ENCODE measurements at regions of chr10 and their contacts with region 1.

Region 1: GRCh38 chr10:45580371-45581215 is 92.0 kb downstream of the ZFAND4 start:
- DNase-seq: peak in 8 of 35 experiments; percentile 10 to 59 (median 15)
- ATAC-seq: peak; percentile 63 to 77 (median 68)
- H3K4me3 ChIP-seq: peak overlapping the region; percentile 53 to 61
- H3K4me3 Mint-ChIP-seq: peak overlapping the region; percentile 87 to 94 (median 93)
- H3K27ac ChIP-seq: peak overlapping the region; percentile 82
- H3K27ac Mint-ChIP-seq: peak overlapping the region; percentile 97 to 99
- H3K4me1 ChIP-seq: peaks cover 9 to 11% of the 10 kb centered on the region in 2 experiments
- H3K4me1 Mint-ChIP-seq: peaks cover 42 to 52% (median 50%) of the 10 kb centered on the region in 3 donors
- H3K27me3 ChIP-seq: no peaks in the 10 kb centered on the region
- H3K27me3 Mint-ChIP-seq: no peaks in the 10 kb centered on the region

Region 2: DNA sequence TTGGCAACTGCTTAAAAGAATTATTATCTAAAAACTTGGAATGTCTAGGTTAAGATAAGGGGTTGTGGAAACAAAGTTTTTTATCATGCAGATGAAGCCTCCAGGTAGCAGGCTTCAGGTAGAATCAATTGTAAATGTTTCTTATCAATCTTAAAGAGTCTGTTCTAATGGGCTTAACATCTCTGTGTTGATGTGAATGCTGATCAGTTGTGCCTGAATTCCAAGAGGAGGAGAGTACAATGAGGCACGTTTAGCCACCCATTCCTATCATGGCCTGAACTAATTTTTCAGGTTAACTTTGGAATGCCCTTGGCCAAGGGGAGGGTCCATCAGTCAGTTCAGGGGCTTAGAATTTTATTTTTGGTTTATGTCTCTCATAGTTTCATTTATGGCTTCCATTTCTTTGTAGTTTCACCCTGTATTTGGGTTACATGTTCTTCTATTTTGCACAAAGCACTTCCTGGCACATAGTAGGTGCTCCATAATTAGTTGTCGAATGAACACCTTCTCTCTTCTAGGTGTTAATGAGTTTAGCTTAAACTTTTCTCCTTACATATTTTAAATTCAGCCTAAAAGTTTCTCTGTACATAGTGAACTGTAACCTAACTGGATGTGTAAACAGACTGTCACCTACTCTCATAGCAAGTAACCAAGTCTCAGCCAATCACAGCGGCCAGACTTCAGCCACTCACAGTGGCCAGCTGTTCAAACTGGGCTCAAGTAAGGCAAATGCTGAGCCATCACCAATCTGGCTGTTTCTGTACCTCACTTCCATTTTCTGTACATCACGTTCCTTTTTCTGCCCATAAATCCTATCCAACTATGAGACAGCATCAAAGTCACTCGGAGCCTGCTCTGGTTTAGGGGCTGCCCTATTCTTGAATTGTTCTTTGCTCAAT is 171.9 kb before region 1 on chr10:
- CTCF ChIA-PET with region 1: no interaction called
- POLR2A ChIA-PET with region 1: no interaction called
- DNase-seq: no peak
- ATAC-seq: no peak
- H3K4me3 ChIP-seq: no peak overlapping the region
- H3K4me3 Mint-ChIP-seq: no peak overlapping the region
- H3K27ac ChIP-seq: no peak overlapping the region
- H3K27ac Mint-ChIP-seq: no peak overlapping the region
- H3K4me1 ChIP-seq: no peaks in the 10 kb centered on the region
- H3K4me1 Mint-ChIP-seq: peaks cover 3 to 12% (median 8%) of the 10 kb centered on the region in 3 donors
- H3K27me3 ChIP-seq: peaks cover 0 to 6% of the 10 kb centered on the region in 2 experiments
- H3K27me3 Mint-ChIP-seq: peaks cover 4 to 15% of the 10 kb centered on the region in 2 donors

Region 3: DNA sequence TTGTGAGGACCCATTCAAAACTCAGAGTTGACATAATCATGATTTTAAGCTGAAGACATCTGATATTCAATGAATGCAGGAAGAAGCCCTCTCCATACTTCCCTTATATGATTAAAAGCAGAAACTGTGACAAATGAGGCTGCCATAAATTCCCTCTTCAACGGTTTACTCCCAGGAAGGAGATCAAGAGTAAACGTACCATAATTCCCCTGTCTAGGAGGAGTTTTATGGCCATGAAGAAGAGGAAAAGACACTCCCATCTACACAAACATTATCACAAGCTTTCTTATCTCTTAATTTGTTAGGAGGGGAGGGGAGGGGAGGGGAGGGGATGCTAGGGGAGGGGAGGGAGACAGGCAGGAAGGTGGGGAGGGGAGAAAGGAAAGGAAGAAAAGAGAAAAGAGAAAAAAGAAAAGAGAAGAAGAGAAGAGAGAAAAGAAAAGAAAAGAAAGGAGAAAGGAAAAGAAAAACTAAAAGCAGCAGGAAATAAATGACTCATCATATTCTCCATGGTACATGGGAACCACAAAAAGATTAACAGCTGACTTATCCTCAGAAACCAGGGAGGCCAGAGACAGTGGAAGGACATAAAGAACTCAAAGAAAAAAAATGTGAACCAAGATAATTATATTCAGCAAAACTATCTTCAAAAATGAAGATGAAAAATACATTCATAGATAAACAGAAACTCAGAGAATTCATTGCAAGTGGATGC is 85.0 kb before region 1 on chr10:
- CTCF ChIA-PET with region 1: interaction called in 1 of 2 experiments, 15 read pairs
- POLR2A ChIA-PET with region 1: no interaction called
- DNase-seq: no peak
- ATAC-seq: no peak
- H3K4me3 ChIP-seq: no peak overlapping the region
- H3K4me3 Mint-ChIP-seq: no peak overlapping the region
- H3K27ac ChIP-seq: no peak overlapping the region
- H3K27ac Mint-ChIP-seq: peak overlapping the region in 1 of 2 donors; percentile 37
- H3K4me1 ChIP-seq: no peaks in the 10 kb centered on the region
- H3K4me1 Mint-ChIP-seq: peaks cover 11 to 32% (median 20%) of the 10 kb centered on the region in 3 donors
- H3K27me3 ChIP-seq: no peaks in the 10 kb centered on the region
- H3K27me3 Mint-ChIP-seq: no peaks in the 10 kb centered on the region

Region 4: DNA sequence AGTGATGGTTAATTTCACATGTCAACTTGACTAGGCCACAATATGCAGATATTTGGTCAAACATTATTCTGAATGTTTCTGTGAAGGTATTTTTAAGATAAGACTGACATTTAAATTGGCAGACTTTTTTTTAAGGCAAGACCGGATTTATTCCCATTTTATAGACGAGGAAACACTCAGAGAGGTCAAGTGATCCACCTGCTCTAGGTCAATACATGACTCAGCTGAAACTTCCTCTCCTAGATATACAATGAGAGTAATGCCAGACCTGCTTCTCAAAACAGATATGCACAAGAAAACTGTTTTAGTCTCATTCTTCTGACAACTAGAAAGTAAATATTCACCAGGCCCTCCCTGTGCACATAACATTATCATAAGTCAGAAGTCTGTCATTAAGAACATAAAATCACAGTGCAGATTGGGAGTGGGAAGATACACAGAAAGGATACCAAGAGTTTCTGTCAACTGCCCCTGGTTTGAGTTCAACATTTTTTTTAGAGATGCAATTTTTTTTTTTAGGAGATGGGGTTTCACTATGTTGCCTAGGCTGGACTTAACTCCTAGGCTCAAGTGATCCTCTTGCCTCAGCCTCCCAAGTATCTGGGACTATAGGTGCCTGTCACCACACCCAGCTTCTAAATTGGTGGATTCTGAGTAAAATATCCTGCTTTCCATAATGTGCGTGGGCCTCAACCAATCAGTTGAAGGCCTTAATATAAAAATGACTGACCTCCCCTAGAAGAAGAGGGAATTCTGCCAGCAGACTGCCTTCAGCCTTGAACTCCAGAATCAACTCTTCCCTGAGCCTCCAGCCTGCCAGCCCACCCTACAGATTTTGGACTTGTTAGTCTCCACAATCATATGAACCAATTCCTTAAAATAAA is 29.4 kb before region 1 on chr10:
- CTCF ChIA-PET with region 1: no interaction called
- POLR2A ChIA-PET with region 1: interaction called in 1 of 2 experiments, 10 read pairs
- DNase-seq: no peak
- ATAC-seq: no peak
- H3K4me3 ChIP-seq: no peak overlapping the region
- H3K4me3 Mint-ChIP-seq: no peak overlapping the region
- H3K27ac ChIP-seq: no peak overlapping the region
- H3K27ac Mint-ChIP-seq: no peak overlapping the region
- H3K4me1 ChIP-seq: no peaks in the 10 kb centered on the region
- H3K4me1 Mint-ChIP-seq: peaks cover 23 to 33% (median 31%) of the 10 kb centered on the region in 3 donors
- H3K27me3 ChIP-seq: no peaks in the 10 kb centered on the region
- H3K27me3 Mint-ChIP-seq: no peaks in the 10 kb centered on the region

Region 5: GRCh38 chr10:46226900-46227558 is 646.4 kb after region 1 on chr10:
- CTCF ChIA-PET with region 1: no interaction called
- POLR2A ChIA-PET with region 1: interaction called in 1 of 2 experiments, 15 read pairs
- DNase-seq: peak in 1 of 35 experiments; percentile 3
- ATAC-seq: no peak
- H3K4me3 ChIP-seq: no peak overlapping the region
- H3K4me3 Mint-ChIP-seq: no peak overlapping the region
- H3K27ac ChIP-seq: no peak overlapping the region
- H3K27ac Mint-ChIP-seq: no peak overlapping the region
- H3K4me1 ChIP-seq: peaks cover 0 to 18% of the 10 kb centered on the region in 2 experiments
- H3K4me1 Mint-ChIP-seq: peaks cover 11 to 42% (median 18%) of the 10 kb centered on the region in 3 donors
- H3K27me3 ChIP-seq: no peaks in the 10 kb centered on the region
- H3K27me3 Mint-ChIP-seq: no peaks in the 10 kb centered on the region

Measured in T-cell (primary cell).